PC-9 (cell line): ENCODE measurements at regions of chr20 and their contacts with region 1.

Region 1: GRCh38 chr20:52410182-52410647 is 218.6 kb upstream of the ZFP64 start:
- DNase-seq: no peak
- H3K4me3 ChIP-seq: no peak overlapping the region
- H3K27ac ChIP-seq: no peak overlapping the region
- H3K4me1 ChIP-seq: no peaks in the 10 kb centered on the region
- H3K27me3 ChIP-seq: no peaks in the 10 kb centered on the region
- CTCF ChIP-seq: no peak

Region 2: GRCh38 chr20:51299413-51299812 is 1110.8 kb before region 1 on chr20:
- CTCF ChIA-PET with region 1: no interaction called
- POLR2A ChIA-PET with region 1: interaction called, 16 read pairs
- intact Hi-C with region 1: no loop called
- DNase-seq: no peak
- H3K4me3 ChIP-seq: no peak overlapping the region
- H3K27ac ChIP-seq: no peak overlapping the region
- H3K4me1 ChIP-seq: no peaks in the 10 kb centered on the region
- H3K27me3 ChIP-seq: peaks cover 32% of the 10 kb centered on the region; the same call in 1 of the 2 replicates
- CTCF ChIP-seq: no peak

Region 3: GRCh38 chr20:52569201-52569600 is 159.0 kb after region 1 on chr20:
- CTCF ChIA-PET with region 1: no interaction called
- POLR2A ChIA-PET with region 1: no interaction called
- intact Hi-C with region 1: no loop called
- DNase-seq: no peak
- H3K4me3 ChIP-seq: no peak overlapping the region
- H3K27ac ChIP-seq: no peak overlapping the region
- H3K4me1 ChIP-seq: no peaks in the 10 kb centered on the region
- H3K27me3 ChIP-seq: no peaks in the 10 kb centered on the region
- CTCF ChIP-seq: no peak